K562 (cell line): ENCODE measurements at regions of chr4 and their contacts with region 1.

Region 1: GRCh38 chr4:186536285-186536684 is 19.1 kb downstream of the MTNR1A start:
- DNase-seq: peak; percentile 33 to 47 (median 38)
- ATAC-seq: peak; percentile 69
- H3K4me3 ChIP-seq: no peak overlapping the region
- H3K27ac ChIP-seq: no peak overlapping the region
- H3K4me1 ChIP-seq: peaks cover 4 to 7% of the 10 kb centered on the region in 2 experiments; a peak in 3 of 5 replicates
- H3K27me3 ChIP-seq: no peaks in the 10 kb centered on the region
- CTCF ChIP-seq: peak; percentile 53 to 94 (median 69)
- EP300 ChIP-seq: no peak
- POLR2A ChIP-seq: no peak
- RAD21 ChIP-seq: no peak

Region 2: DNA sequence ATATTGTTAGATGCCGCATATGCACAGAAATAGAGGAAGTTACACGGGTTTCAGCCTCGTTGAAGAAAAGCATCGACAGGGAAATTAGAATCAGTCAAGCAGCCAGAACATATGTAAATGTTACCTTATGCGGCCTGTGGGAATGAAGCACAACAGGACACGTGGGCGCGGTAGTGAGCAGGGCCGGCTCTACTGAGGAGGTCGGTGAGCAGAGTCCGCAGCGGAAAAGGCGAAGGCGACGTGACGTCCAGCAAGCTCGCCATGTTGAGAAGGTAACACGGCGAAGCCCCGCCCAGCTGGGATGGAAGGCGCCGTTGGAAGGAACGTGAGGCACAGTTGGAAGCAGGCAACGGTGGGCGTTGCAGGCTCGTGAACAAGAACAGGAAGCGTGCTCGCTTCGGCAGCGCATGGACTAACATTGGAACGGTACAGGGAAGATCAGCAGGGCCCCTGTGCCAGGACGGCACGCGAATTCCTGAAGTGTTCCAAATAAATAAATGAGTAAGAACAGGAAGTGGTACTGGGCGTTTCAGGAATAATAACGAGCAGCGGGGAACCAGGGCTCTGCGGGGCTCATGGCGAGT is 35.5 kb before region 1 on chr4:
- CTCF ChIA-PET with region 1: no interaction called
- POLR2A ChIA-PET with region 1: interaction called, 3 read pairs
- in situ Hi-C with region 1: no loop called
- intact Hi-C with region 1: loop called (anchors 2 kb)
- DNase-seq: peak; percentile 82 to 96 (median 84)
- ATAC-seq: peak; percentile 96
- H3K4me3 ChIP-seq: peak overlapping the region; percentile 36
- H3K27ac ChIP-seq: peak overlapping the region; percentile 87
- H3K4me1 ChIP-seq: peaks cover 6 to 8% of the 10 kb centered on the region in 2 experiments; a peak in 4 of 5 replicates
- H3K27me3 ChIP-seq: 0 out of 5 replicates have a peak, but pooled peaks cover 0 to under 1% of the 10 kb centered on the region in 2 experiments
- CTCF ChIP-seq: peak in 1 of 3 experiments; percentile 36; a peak in 2 of 6 replicates
- EP300 ChIP-seq: no peak
- POLR2A ChIP-seq: peak; percentile 94
- RAD21 ChIP-seq: no peak

Region 3: DNA sequence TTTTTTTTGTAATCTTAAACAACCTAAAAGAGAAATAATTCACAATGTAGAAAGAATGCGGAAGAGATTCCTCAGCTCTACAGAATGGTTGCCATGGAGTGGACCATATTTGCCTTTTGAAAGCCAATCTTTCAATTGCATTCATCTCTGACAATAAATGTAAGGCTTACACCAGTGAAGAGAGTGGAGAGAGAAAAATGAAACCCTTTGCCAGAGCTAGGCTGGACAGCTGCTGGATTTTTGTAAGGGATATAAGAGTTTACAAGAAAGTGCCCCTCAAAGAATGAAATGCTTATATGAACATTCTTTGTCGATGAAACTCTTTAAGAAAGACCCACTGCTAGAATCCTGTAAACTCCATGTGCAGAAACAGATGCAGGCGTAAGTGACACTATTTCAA is 253.4 kb after region 1 on chr4:
- CTCF ChIA-PET with region 1: no interaction called
- POLR2A ChIA-PET with region 1: no interaction called
- in situ Hi-C with region 1: no loop called
- intact Hi-C with region 1: no loop called
- DNase-seq: no peak
- ATAC-seq: no peak
- H3K4me3 ChIP-seq: no peak overlapping the region
- H3K27ac ChIP-seq: no peak overlapping the region
- H3K4me1 ChIP-seq: peaks cover 0 to 5% of the 10 kb centered on the region in 2 experiments; a peak in 1 of 5 replicates
- H3K27me3 ChIP-seq: no peaks in the 10 kb centered on the region
- CTCF ChIP-seq: no peak
- EP300 ChIP-seq: no peak
- POLR2A ChIP-seq: no peak
- RAD21 ChIP-seq: no peak